CD8-positive, alpha-beta T cell (primary cell): ENCODE measurements at regions of chr19 and their contacts with region 1.

Region 1: DNA sequence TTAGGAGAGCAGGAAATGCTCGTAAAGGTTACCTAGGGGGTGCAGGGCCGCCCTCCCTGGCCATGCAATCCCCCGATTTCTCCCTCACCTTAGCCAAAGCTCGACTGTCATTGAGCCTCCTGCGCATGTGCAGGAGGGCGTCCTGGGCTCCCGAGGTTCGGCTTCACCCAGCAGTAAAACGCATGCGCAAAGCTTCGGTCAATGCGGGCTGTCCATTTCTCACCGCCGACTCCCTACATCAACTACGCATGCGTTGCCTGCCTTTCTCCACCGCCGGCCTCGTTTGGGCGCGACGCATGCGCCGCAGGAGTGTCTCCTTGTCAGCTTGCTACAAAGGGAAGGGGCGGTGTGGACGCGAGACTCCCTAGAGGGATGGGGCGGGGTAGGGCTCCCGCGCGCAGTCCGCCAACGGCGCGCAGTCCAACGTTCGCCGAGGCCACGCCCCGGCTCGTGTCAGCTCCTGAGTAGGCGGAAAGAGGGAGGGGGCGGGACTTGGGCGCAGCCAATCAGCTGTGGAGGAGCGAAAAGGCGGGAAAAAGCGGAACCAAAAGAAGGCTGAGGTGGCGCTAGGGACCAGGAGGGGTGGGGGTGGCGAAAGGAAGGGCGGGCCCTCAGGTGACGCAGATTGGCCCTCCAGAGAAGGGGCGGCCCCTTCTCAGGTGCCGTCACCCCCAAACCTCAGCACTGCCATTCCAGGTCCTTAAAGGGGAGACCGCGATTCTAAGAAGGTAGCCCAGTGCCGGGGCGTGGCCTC is at the starts of genes SYNGR4 and TMEM143:
- DNase-seq: peak; percentile 96 to 100 (median 98)
- ATAC-seq: peak; percentile 88
- H3K4me3 ChIP-seq: peak within 1 kb of the TSS; percentile 82 to 90
- H3K4me3 Mint-ChIP-seq: peak within 1 kb of the TSS; percentile 83
- H3K27ac ChIP-seq: peak within 1 kb of the TSS; percentile 64 to 89
- H3K27ac Mint-ChIP-seq: peak within 1 kb of the TSS; percentile 86
- H3K4me1 ChIP-seq: peaks cover 17% of the 10 kb centered on the region
- H3K4me1 Mint-ChIP-seq: peaks cover 19% of the 10 kb centered on the region
- H3K27me3 ChIP-seq: no peaks in the 10 kb centered on the region
- H3K27me3 Mint-ChIP-seq: no peaks in the 10 kb centered on the region
- CTCF ChIP-seq: no peak
- total RNA-seq, gene SYNGR4: not detected
- total RNA-seq, gene TMEM143: 6.4 to 7.7 TPM

Region 2: GRCh38 chr19:48321622-48322591 is 42.1 kb before region 1 on chr19:
- CTCF ChIA-PET with region 1: interaction called, 4 read pairs
- POLR2A ChIA-PET with region 1: interaction called, 14 read pairs
- intact Hi-C with region 1: loop called (anchors 1 kb)
- DNase-seq: peak; percentile 99 to 100 (median 100)
- ATAC-seq: peak; percentile 68
- H3K4me3 ChIP-seq: peak overlapping the region; percentile 76 to 78
- H3K4me3 Mint-ChIP-seq: peak overlapping the region; percentile 94
- H3K27ac ChIP-seq: peak overlapping the region; percentile 87 to 99
- H3K27ac Mint-ChIP-seq: peak overlapping the region; percentile 100
- H3K4me1 ChIP-seq: peaks cover 54% of the 10 kb centered on the region
- H3K4me1 Mint-ChIP-seq: peaks cover 60% of the 10 kb centered on the region
- H3K27me3 ChIP-seq: no peaks in the 10 kb centered on the region
- H3K27me3 Mint-ChIP-seq: no peaks in the 10 kb centered on the region
- CTCF ChIP-seq: no peak

Region 3: GRCh38 chr19:48398375-48399235 is 34.6 kb after region 1 on chr19:
- CTCF ChIA-PET with region 1: no interaction called
- POLR2A ChIA-PET with region 1: interaction called, 4 read pairs
- intact Hi-C with region 1: loop called (anchors 1 kb)
- DNase-seq: peak; percentile 73 to 94 (median 86)
- ATAC-seq: peak; percentile 77
- H3K4me3 ChIP-seq: peak overlapping the region; percentile 45 to 47
- H3K4me3 Mint-ChIP-seq: peak overlapping the region; percentile 63
- H3K27ac ChIP-seq: peak overlapping the region in 1 of 2 experiments; percentile 35
- H3K27ac Mint-ChIP-seq: no peak overlapping the region
- H3K4me1 ChIP-seq: peaks cover 42% of the 10 kb centered on the region
- H3K4me1 Mint-ChIP-seq: peaks cover 36% of the 10 kb centered on the region
- H3K27me3 ChIP-seq: peaks cover 20 to 32% of the 10 kb centered on the region in 2 experiments
- H3K27me3 Mint-ChIP-seq: peaks cover 22% of the 10 kb centered on the region
- CTCF ChIP-seq: no peak

Region 4: GRCh38 chr19:48468775-48469288 is 104.8 kb after region 1 on chr19:
- CTCF ChIA-PET with region 1: no interaction called
- POLR2A ChIA-PET with region 1: no interaction called
- intact Hi-C with region 1: loop called (anchors 1 kb)
- DNase-seq: peak; percentile 98 to 100 (median 99)
- ATAC-seq: peak; percentile 85
- H3K4me3 ChIP-seq: peak overlapping the region; percentile 83 to 95
- H3K4me3 Mint-ChIP-seq: peak overlapping the region; percentile 90
- H3K27ac ChIP-seq: peak overlapping the region; percentile 75 to 90
- H3K27ac Mint-ChIP-seq: peak overlapping the region; percentile 85
- H3K4me1 ChIP-seq: peaks cover 15% of the 10 kb centered on the region
- H3K4me1 Mint-ChIP-seq: peaks cover 21% of the 10 kb centered on the region
- H3K27me3 ChIP-seq: no peaks in the 10 kb centered on the region
- H3K27me3 Mint-ChIP-seq: no peaks in the 10 kb centered on the region
- CTCF ChIP-seq: no peak

Region 5: DNA sequence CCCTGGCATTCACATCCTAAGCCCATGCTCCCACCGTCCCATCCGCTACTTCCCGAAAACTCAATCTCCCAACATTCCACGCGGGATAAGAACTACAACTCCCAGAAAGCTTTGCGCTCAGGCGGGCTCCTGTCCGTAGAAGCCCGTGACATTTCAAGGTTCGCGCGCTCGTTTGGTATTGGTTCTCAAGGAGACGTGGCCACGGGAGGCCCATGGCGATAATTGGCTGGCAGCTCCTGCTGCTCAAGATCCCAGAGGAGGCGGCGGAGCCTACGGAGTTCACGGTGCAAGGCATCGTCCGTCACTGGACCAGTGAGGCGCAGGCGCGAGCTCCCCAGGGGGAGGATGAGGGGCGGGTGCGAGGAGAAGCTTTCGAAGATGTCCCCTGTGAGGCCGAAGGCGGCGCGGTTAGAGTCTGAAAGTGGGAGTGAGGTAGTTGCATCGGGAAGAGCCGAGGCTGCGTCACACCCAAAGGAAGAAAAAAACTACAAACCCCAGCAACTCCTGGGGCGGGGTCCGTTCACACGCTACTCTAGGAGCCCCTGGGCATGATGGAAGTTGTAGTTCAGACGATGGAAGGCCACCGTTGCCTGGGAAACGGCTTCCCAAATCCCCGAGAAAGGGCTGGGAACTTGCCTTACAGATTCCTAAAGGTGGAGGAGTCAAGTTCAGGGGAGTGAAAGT is 356.8 kb after region 1 on chr19:
- CTCF ChIA-PET with region 1: no interaction called
- POLR2A ChIA-PET with region 1: no interaction called
- intact Hi-C with region 1: loop called in 1 of 2 experiments (anchors 10 kb)
- DNase-seq: peak; percentile 81 to 96 (median 90)
- ATAC-seq: peak; percentile 80
- H3K4me3 ChIP-seq: peak overlapping the region; percentile 65 to 69
- H3K4me3 Mint-ChIP-seq: peak overlapping the region; percentile 96
- H3K27ac ChIP-seq: peak overlapping the region; percentile 52 to 88
- H3K27ac Mint-ChIP-seq: peak overlapping the region; percentile 96
- H3K4me1 ChIP-seq: peaks cover 16% of the 10 kb centered on the region
- H3K4me1 Mint-ChIP-seq: peaks cover 24% of the 10 kb centered on the region
- H3K27me3 ChIP-seq: no peaks in the 10 kb centered on the region
- H3K27me3 Mint-ChIP-seq: no peaks in the 10 kb centered on the region
- CTCF ChIP-seq: no peak

Region 6: DNA sequence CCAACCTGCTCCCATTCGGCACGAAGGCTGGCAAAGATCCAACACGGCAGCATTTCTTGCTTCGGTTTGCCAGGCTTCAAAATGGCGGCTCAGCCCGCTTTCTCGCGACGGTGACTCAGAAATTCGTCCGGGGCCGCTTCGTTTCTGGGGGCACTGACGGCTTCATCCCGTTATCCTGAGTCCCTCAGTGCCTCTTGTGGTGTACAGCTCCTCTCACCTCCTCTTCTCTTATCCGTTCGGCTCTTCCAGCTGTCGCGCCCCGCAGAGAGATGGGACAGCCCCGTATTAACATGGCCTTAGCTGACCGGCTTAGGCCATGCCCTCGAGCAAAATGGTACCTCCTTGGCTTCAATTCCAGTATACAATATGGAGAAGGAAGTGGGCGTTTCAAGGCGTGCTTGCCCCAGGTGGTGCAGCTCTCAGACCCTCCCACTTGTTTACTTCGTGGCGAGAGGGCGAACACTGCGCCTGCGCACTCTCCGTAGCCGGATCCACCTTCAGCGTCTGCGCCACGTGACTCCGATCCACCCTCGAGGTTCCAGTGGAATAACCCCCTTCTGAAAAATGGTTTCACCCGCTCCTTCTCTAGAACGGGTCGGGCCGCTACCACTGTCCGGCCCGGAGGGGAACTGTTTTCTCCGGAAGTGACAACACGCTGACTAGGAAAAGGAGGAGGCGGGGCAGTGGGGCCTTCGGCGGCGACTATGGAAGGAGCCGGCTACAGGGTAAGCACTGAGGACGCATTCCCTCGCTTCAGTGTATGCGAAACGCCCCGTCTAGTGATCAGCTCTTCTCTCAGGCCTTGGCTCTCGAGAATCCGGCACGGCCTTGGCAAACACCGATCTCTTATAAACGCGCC is 1513.3 kb after region 1 on chr19 and contains the starts of genes AKT1S1 and TBC1D17:
- CTCF ChIA-PET with region 1: no interaction called
- POLR2A ChIA-PET with region 1: no interaction called
- intact Hi-C with region 1: loop called in 1 of 2 experiments (anchors 5 kb)
- DNase-seq: peak; percentile 96 to 100 (median 97)
- ATAC-seq: peak; percentile 60
- H3K4me3 ChIP-seq: peak within 1 kb of the TSS; percentile 88 to 97
- H3K4me3 Mint-ChIP-seq: no peak within 1 kb of the TSS
- H3K27ac ChIP-seq: peak within 1 kb of the TSS; percentile 97 to 98
- H3K27ac Mint-ChIP-seq: no peak within 1 kb of the TSS
- H3K4me1 ChIP-seq: peaks cover 22% of the 10 kb centered on the region
- H3K4me1 Mint-ChIP-seq: peaks cover 29% of the 10 kb centered on the region
- H3K27me3 ChIP-seq: no peaks in the 10 kb centered on the region
- H3K27me3 Mint-ChIP-seq: no peaks in the 10 kb centered on the region
- CTCF ChIP-seq: no peak
- total RNA-seq, gene AKT1S1: 12.6 to 14.1 TPM
- total RNA-seq, gene TBC1D17: 31.1 to 31.2 TPM